Activated naive CD4-positive, alpha-beta T cell treated with anti-CD3 and anti-CD28 coated beads, Interleukin-2, amount 10 ng/mL, durations not matched to agents 7 days and 5 days (primary cell): ENCODE measurements at regions of chr13 and their contacts with region 1.

Region 1: GRCh38 chr13:45297456-45298205 is 43.4 kb downstream of the TPT1 start:
- DNase-seq: peak; percentile 41
- H3K4me3 Mint-ChIP-seq: no peak overlapping the region
- H3K27ac Mint-ChIP-seq: peak overlapping the region; percentile 85
- H3K4me1 Mint-ChIP-seq: peaks cover 35% of the 10 kb centered on the region
- H3K27me3 Mint-ChIP-seq: peaks cover 14% of the 10 kb centered on the region

Region 2: DNA sequence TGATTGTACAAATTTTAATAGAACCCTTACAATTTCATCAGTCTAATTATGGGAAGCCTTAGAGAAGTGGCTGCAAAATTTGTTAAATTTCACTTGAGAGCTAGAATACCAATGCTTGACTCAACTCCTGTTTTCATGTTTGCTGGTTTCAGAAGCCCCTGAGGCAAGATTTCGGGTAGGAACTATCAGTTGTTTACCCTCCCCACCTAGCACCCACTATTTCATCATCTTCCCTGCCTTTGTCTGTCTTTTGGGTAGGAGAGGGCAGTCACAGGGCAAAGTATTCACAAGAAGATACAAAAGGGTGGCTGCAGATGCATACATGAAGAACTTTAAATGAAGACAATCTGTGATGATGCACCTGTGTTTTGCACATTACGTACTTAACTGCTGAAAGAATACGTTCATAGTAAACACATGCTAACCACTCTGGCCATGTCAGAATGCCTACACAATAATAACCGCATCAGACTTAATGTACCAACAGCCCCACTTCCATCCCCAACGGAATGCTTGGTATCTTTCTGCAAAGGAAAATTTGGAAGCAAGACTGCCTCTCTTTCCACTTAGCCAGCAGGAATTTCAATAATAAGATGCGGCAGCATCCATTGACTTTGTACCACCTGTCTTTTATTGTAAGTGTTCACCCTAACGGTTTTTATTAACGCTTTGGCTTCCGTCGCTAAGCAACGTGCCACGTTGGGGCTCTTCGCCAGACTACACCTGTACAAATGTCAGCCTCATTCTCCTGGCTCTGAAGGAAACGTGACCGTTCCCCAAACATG is 12.9 kb after region 1 on chr13:
- CTCF ChIA-PET with region 1: interaction called, 13 read pairs
- DNase-seq: no peak
- H3K4me3 Mint-ChIP-seq: peak overlapping the region; percentile 75
- H3K27ac Mint-ChIP-seq: peak overlapping the region; percentile 59
- H3K4me1 Mint-ChIP-seq: peaks cover 22% of the 10 kb centered on the region
- H3K27me3 Mint-ChIP-seq: peaks cover 42% of the 10 kb centered on the region